ENCODE measurements at regions of chr1 and their contacts with region 1.

Region 1: DNA sequence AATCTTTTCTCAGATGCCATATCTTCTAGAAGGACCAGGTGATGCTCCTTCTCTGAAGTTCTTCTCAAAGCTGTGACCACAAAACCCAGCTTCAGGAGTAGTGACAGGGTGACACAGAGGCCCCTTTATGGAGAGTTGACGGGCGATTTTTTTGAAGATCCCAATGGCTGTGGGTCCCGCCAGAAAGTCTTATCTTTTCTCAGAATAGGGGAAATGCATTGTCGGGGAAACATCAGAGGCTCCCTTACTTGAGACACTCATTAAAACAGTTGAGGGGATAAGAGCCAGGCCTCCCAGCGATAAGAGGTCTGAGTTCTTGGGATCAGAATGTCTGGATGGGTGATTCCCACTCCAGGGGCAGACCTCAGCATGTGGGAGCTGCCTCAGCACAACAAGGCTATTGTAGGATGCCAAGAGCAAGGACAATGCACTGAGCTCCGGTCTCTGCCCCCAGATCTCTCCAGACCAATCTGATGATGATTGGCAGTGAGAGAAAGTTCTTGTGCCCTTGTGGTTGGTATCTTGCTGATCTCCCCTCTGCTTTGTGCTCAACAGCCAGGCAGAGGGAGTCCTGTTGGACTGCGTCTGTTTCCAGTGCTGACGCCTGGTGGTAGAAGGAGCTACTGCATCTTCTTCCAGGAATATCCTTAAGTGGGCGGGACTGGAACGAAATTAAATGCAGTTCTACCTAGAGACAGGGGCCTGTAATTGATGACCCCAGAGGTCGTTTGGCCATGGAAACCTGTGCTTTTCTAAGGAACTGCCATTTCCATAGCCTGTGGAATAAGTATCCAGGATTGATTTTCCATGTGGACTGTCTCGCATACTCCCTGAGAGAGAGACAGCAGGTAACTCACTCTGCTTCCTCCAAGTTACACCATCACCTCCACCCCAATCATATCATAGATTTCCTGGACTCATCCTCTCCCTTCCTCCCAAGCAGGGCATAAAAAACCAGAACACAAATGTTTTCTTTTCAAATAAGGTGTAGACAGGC is 6.8 kb upstream of the ACKR1 start:
- DNase-seq: peak in 8 of 10 donors; percentile 56 to 95 (median 77)

Region 2: GRCh38 chr1:159056069-159056698 is 141.7 kb before region 1 on chr1:
- intact Hi-C with region 1: no loop called
- DNase-seq: peak in 3 of 10 donors; percentile 25 to 63 (median 43)

Region 3: DNA sequence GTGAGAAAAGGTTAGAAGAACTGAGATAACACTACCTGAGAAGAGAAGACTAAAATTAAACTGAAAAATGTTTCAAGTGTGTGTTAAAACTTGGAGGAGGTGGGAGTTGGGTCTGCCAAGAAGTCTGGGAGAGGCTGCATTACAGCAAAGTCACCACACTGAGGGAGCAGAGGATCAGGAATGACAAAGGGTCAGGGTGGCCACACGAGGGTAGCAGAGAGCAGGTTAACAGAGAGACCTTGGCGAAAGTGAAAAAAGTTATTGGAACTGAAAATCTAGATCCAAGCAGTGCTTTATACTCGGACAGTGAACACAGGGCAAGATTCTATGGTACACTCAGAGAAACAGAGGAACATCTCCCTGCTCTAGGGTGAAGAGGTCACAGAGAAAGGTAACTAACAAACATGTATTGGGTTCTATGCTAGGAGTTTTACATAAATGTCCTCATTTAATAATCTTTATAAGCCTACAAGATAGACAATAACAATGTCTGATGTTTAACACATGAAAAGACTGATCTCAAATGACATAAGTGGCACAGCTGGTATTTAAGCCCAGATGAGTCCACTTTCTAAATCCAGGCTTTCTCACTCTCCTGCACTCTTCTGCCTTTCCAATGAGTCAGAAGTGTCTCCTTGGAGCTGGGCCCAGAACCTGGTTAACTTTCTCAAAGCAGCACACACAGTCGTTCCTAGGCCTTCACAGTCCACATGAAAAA is 36.7 kb before region 1 on chr1:
- intact Hi-C with region 1: loop called (anchors 1 kb)
- DNase-seq: peak; percentile 57 to 95 (median 76)

Region 4: DNA sequence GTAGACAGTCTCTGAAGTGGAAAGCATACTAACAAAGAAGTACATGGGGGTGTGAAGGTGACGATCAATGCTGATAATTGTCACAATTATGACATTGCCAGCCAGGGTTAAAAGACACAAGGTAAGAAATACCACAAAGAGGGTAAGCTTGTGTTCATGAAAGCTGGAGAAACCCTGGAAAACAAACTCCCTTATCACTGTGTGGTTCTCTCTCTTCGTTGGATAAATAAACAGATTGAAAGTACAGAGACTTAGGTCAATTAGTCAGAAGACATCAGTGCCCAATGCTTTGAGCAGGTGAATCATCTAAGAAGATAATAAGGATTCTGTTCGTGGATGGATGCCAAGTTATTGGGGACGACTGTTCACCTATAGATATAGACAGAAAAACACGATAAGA is 81.9 kb after region 1 on chr1:
- intact Hi-C with region 1: no loop called
- DNase-seq: no peak

Measured in posterior cingulate gyrus (tissue), 11 donors.